Heart right ventricle (tissue), 16 donors: ENCODE measurements at regions of chr2 and their contacts with region 1.

Region 1: GRCh38 chr2:219642465-219643080 is 15.1 kb downstream of the SLC4A3 start:
- DNase-seq: peak; percentile 94 to 95
- ATAC-seq: peak; percentile 51 to 79 (median 65)
- H3K4me3 ChIP-seq: no peak overlapping the region
- H3K27ac ChIP-seq: peak overlapping the region in 9 of 10 donors; percentile 75 to 99 (median 88)
- H3K4me1 ChIP-seq: peaks cover 16 to 88% (median 47%) of the 10 kb centered on the region in 9 donors
- H3K27me3 ChIP-seq: no peaks in the 10 kb centered on the region
- CTCF ChIP-seq: peak; percentile 93 to 100 (median 98)

Region 2: GRCh38 chr2:219550066-219550465 is 92.5 kb before region 1 on chr2:
- intact Hi-C with region 1: no loop called
- DNase-seq: no peak
- ATAC-seq: no peak
- H3K4me3 ChIP-seq: no peak overlapping the region
- H3K27ac ChIP-seq: no peak overlapping the region
- H3K4me1 ChIP-seq: peaks cover 12 to 23% (median 17%) of the 10 kb centered on the region in 9 donors
- H3K27me3 ChIP-seq: peaks cover 0 to 63% (median 29%) of the 10 kb centered on the region in 7 donors
- CTCF ChIP-seq: no peak

Region 3: DNA sequence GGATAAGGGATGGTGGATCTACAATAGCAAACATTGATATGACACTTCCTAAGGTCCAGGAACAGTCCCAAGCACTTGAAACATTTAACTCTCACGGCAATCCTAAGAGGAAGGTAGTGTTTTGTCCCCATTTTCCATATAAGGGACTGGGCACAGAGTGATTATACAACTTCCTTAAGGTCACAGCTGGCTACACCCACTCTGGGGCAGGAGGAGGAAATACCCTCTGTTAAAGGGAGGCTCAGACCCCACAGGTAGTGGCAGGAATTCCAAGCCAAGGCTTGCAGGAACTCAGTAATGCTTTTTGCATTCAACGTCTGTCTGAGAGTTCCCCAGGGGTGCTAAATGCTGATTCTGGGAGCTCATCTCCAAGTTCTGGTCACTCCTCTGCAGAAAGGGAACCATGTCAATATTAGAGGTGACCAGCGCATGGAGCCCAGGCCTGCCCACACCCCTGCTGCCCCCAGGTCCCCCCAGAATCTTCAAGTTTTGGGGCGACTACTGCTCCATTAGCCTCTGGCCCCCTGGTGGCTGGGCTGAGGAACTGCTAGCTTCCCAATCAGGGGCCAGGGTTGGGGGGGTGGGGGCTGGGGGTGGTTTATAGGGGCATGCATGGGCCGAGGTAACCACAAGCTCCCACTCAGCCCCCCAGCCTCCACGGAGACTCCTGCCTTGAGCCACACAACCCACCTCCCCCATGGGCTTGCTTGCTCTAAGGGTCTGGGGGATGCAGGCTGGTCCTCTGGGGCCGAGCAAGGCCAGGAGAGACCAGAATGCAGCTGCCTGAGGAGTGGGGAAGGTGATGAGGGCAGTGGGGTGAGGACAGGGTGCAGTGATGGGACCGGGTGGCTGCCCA is 82.3 kb before region 1 on chr2:
- intact Hi-C with region 1: loop called in 1 of 10 experiments (anchors 10 kb)
- DNase-seq: no peak
- ATAC-seq: peak in 2 of 8 donors; percentile 5 to 23
- H3K4me3 ChIP-seq: no peak overlapping the region
- H3K27ac ChIP-seq: no peak overlapping the region
- H3K4me1 ChIP-seq: peaks cover 0 to 23% (median 3%) of the 10 kb centered on the region in 9 donors
- H3K27me3 ChIP-seq: no peaks in the 10 kb centered on the region
- CTCF ChIP-seq: peak; percentile 47 to 83 (median 74)

Region 4: GRCh38 chr2:219571311-219572236 is 71.0 kb before region 1 on chr2 and contains the start of gene OBSL1:
- intact Hi-C with region 1: loop called in 3 of 10 experiments (anchors 1 to 10 kb)
- DNase-seq: peak; percentile 80 to 84
- ATAC-seq: peak; percentile 77 to 90 (median 85)
- H3K4me3 ChIP-seq: peak within 1 kb of the TSS; percentile 9 to 95 (median 70)
- H3K27ac ChIP-seq: peak within 1 kb of the TSS; percentile 65 to 95 (median 88)
- H3K4me1 ChIP-seq: peaks cover 2 to 43% (median 13%) of the 10 kb centered on the region in 9 donors
- H3K27me3 ChIP-seq: peaks cover 0 to 40% (median 0%) of the 10 kb centered on the region in 7 donors
- CTCF ChIP-seq: no peak
- total RNA-seq, gene OBSL1: 161 to 277 (median 171) TPM

Region 5: GRCh38 chr2:219597552-219598307 is 44.8 kb before region 1 on chr2 and contains the start of gene STK11IP:
- intact Hi-C with region 1: loop called in 2 of 10 experiments (anchors 1 to 5 kb)
- DNase-seq: peak; percentile 94 to 98
- ATAC-seq: peak; percentile 96 to 99 (median 98)
- H3K4me3 ChIP-seq: peak within 1 kb of the TSS; percentile 46 to 80 (median 70)
- H3K27ac ChIP-seq: peak within 1 kb of the TSS; percentile 87 to 97 (median 94)
- H3K4me1 ChIP-seq: peaks cover 0 to 29% (median 10%) of the 10 kb centered on the region in 9 donors
- H3K27me3 ChIP-seq: no peaks in the 10 kb centered on the region
- CTCF ChIP-seq: no peak
- total RNA-seq, gene STK11IP: 7.2 to 18.2 (median 12.9) TPM

Region 6: GRCh38 chr2:219627103-219628100 is 15.2 kb before region 1 on chr2 and contains the start of gene SLC4A3:
- intact Hi-C with region 1: loop called in 1 of 10 experiments (anchors 2 kb)
- DNase-seq: peak in 1 of 2 donors; percentile 55
- ATAC-seq: peak in 7 of 8 donors; percentile 4 to 34 (median 14)
- H3K4me3 ChIP-seq: peak within 1 kb of the TSS in 9 of 10 donors; percentile 50 to 60 (median 58)
- H3K27ac ChIP-seq: peak within 1 kb of the TSS; percentile 79 to 99 (median 94)
- H3K4me1 ChIP-seq: peaks cover 3 to 77% (median 22%) of the 10 kb centered on the region in 9 donors
- H3K27me3 ChIP-seq: peaks cover 0 to 38% (median 9%) of the 10 kb centered on the region in 7 donors
- CTCF ChIP-seq: peak in 4 of 9 donors; percentile 11 to 40 (median 22)
- total RNA-seq, gene SLC4A3: 339 to 671 (median 422) TPM

Region 7: DNA sequence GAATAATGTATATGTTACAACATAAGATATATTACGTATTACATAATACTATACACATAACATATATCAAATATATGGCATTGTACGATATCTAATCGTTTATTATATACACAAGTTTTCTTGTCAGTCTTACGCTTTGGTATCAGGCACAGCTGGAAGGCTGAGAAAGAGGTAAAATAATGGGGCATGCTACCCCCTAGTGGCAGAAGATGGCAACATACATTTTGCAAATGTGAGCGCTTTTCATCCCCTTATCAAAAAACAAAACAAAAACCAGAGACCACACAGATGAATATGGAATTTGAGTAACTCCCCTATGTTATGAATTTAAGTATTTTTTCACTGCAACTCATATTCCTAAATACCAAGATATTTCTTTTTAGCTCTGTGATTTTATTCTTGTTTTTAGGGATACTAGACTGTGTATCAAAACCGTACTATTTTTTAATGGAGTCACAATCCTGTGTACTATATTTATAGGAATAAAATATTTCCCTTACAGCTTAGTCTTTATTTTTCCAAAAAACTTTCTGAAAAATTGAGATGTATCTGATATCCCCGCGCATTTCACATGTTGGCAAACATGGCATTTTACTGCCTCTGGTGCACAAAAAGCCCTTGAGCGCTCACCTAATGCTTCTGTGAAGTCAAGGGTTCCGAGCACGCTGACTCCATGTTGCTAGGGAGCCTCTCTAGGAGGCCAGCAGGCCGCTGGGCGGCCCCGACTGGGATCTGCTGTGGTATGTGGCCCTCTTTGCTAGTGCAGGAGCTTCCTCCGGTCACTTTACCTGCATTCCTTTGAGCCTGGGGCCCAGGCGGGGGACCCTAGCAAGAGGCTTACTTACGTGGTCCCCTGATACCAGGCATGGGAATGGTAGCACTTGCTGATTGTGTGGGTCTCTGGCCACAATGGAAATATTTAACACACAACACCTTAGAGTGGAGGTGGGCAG is 47.4 kb after region 1 on chr2:
- intact Hi-C with region 1: loop called in 5 of 10 experiments (anchors 1 to 5 kb)
- DNase-seq: peak in 1 of 2 donors; percentile 44
- ATAC-seq: peak; percentile 17 to 72 (median 59)
- H3K4me3 ChIP-seq: no peak overlapping the region
- H3K27ac ChIP-seq: peak overlapping the region in 6 of 10 donors; percentile 62 to 75 (median 68)
- H3K4me1 ChIP-seq: peaks cover 0 to 17% (median 8%) of the 10 kb centered on the region in 9 donors
- H3K27me3 ChIP-seq: peaks cover 0 to 16% (median 4%) of the 10 kb centered on the region in 7 donors
- CTCF ChIP-seq: peak; percentile 69 to 81 (median 79)